Ovary (tissue), 10 donors: ENCODE measurements at regions of chr11 and their contacts with region 1.

Region 1: GRCh38 chr11:47980245-47981049 is at the start of gene PTPRJ:
- DNase-seq: peak; percentile 34 to 64 (median 63)
- H3K4me3 ChIP-seq: peak within 1 kb of the TSS; percentile 67
- H3K27ac ChIP-seq: peak within 1 kb of the TSS in 1 of 2 donors; percentile 49
- H3K4me1 ChIP-seq: peaks cover 3% of the 10 kb centered on the region
- H3K27me3 ChIP-seq: no peaks in the 10 kb centered on the region
- CTCF ChIP-seq: no peak
- EP300 ChIP-seq: no peak
- POLR2A ChIP-seq: no peak
- total RNA-seq, gene PTPRJ: 3.3 to 16.1 (median 5.5) TPM

Region 2: GRCh38 chr11:47656260-47656885 is 324.1 kb before region 1 on chr11:
- intact Hi-C with region 1: no loop called
- DNase-seq: no peak
- H3K4me3 ChIP-seq: no peak overlapping the region
- H3K27ac ChIP-seq: no peak overlapping the region
- H3K4me1 ChIP-seq: no peaks in the 10 kb centered on the region
- H3K27me3 ChIP-seq: no peaks in the 10 kb centered on the region
- CTCF ChIP-seq: no peak
- EP300 ChIP-seq: no peak
- POLR2A ChIP-seq: no peak

Region 3: DNA sequence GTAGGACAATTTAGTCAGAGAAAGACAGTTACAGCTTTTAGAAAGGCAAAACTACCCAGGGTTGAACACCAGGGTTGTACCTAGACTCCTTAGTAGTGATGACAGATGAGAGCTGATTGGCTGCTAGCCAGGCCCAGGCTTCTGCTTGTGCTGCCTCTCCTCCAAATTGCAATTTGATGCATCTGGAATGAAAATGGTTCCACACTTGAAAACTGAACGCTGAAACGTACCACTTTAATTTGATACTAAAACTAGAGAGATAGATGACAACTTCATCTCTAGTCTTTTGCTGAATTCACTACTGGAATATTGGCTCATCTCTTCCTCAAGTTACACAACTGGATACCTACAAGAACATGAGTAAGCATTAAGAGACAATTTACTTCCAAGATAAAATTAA is 194.1 kb before region 1 on chr11:
- intact Hi-C with region 1: no loop called
- DNase-seq: no peak
- H3K4me3 ChIP-seq: no peak overlapping the region
- H3K27ac ChIP-seq: no peak overlapping the region
- H3K4me1 ChIP-seq: peaks cover 2% of the 10 kb centered on the region
- H3K27me3 ChIP-seq: no peaks in the 10 kb centered on the region
- CTCF ChIP-seq: no peak
- EP300 ChIP-seq: no peak
- POLR2A ChIP-seq: no peak

Region 4: GRCh38 chr11:47938791-47939560 is 41.5 kb before region 1 on chr11:
- intact Hi-C with region 1: loop called in 1 of 4 experiments (anchors 5 kb)
- DNase-seq: no peak
- H3K4me3 ChIP-seq: no peak overlapping the region
- H3K27ac ChIP-seq: no peak overlapping the region
- H3K4me1 ChIP-seq: no peaks in the 10 kb centered on the region
- H3K27me3 ChIP-seq: no peaks in the 10 kb centered on the region
- CTCF ChIP-seq: no peak
- EP300 ChIP-seq: no peak
- POLR2A ChIP-seq: no peak

Region 5: DNA sequence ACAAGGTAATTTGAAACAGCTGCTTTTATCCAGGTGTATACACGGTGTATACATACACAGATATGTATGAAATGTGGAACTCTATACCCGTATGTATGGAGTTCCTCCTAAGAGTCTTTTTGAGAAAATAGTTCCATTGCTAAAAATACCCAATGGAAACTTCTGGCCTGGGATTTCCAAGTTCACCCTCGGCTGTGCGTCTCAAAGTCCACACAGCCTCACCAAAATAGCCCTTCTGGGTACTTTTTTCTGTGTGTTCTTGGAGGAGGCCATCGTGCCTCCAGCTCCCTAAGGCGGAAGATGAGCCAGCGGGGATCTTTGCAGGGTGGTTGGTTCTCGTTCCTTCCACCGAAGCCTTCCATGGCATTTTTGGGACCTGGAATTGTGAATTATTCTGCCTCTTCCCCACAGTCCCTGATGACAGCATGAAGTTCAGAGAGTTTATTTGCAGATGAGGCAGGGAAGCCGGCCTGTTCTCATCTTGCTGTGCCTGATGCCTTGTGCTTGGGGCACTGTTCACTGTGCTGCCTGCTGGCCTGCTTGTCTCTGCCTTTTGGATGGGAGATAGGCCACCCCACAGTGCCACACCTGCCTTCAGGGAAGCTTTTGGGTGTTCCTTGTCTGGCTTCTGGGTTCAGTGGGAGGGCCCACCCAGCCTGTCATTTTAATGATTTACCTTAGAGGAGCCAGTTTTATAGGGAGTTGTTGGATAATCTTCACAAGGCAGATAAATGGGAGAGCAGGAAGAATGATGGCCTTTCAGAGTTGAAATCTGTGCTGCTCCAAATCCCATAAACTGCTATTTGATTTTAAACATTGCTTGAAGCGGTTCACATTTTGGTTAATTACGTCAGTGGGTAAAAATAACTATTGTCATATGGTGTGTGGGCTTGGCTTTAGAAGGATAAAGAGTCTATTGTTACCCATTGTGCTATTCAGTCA is 123.4 kb after region 1 on chr11:
- intact Hi-C with region 1: loop called in 1 of 4 experiments (anchors 2 kb)
- DNase-seq: no peak
- H3K4me3 ChIP-seq: no peak overlapping the region
- H3K27ac ChIP-seq: no peak overlapping the region
- H3K4me1 ChIP-seq: no peaks in the 10 kb centered on the region
- H3K27me3 ChIP-seq: no peaks in the 10 kb centered on the region
- CTCF ChIP-seq: no peak
- EP300 ChIP-seq: no peak
- POLR2A ChIP-seq: no peak